AG04449 (cell line): ENCODE measurements at regions of chr11 and their contacts with region 1.

Region 1: GRCh38 chr11:83827940-83828554 is 541.9 kb upstream of the CCDC90B start:
- DNase-seq: no peak
- H3K4me3 ChIP-seq: peak overlapping the region; percentile 10
- CTCF ChIP-seq: peak; percentile 46

Region 2: GRCh38 chr11:83493917-83494316 is 334.1 kb before region 1 on chr11:
- CTCF ChIA-PET with region 1: no interaction called
- POLR2A ChIA-PET with region 1: no interaction called
- DNase-seq: no peak
- H3K4me3 ChIP-seq: no peak overlapping the region
- CTCF ChIP-seq: no peak

Region 3: DNA sequence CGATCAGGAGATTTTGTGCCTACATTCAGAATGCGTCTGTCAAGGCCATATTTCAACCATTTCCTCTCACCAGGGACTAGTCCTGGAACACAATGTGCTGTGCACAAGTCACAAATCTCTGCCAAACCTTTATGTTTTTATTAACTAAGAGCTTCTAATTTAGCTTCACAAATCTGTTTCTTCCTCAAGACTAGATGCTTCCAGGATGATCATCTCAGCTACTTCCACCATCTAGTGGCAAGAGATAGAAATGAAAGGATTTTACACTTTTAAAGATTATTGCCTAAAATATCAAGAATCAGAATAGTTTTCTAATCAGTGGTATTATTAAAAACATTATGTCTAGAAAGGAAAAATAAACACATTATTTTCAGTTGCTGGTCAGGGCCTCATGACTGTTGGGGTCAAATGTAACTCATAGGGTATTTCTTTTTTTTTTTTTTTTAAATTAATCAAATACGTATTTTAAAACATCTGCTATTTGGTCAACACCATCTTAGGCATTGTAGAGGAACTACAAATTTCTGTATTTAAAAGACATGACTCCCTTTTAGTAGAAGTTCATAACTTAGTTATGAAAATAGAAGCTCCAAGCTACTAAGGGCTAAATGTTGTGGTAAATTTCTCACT is 696.5 kb after region 1 on chr11:
- CTCF ChIA-PET with region 1: interaction called, 19 read pairs
- POLR2A ChIA-PET with region 1: no interaction called
- DNase-seq: no peak
- H3K4me3 ChIP-seq: no peak overlapping the region
- CTCF ChIP-seq: peak; percentile 40

Region 4: GRCh38 chr11:84564180-84564866 is 736.3 kb after region 1 on chr11:
- CTCF ChIA-PET with region 1: interaction called, 21 read pairs
- POLR2A ChIA-PET with region 1: no interaction called
- DNase-seq: no peak
- H3K4me3 ChIP-seq: no peak overlapping the region
- CTCF ChIP-seq: peak; percentile 61